Activated naive CD4-positive, alpha-beta T cell treated with anti-CD3 and anti-CD28 coated beads for 36 hours (primary cell): ENCODE measurements at regions of chr20 and their contacts with region 1.

Region 1: GRCh38 chr20:54199721-54200176 is 8.1 kb upstream of the PFDN4 start:
- DNase-seq: peak; percentile 80
- H3K4me3 Mint-ChIP-seq: no peak overlapping the region
- H3K27ac Mint-ChIP-seq: no peak overlapping the region
- H3K4me1 Mint-ChIP-seq: no peaks in the 10 kb centered on the region
- H3K27me3 Mint-ChIP-seq: no peaks in the 10 kb centered on the region

Region 2: GRCh38 chr20:52497731-52498130 is 1702.0 kb before region 1 on chr20:
- CTCF ChIA-PET with region 1: no interaction called
- intact Hi-C with region 1: no loop called
- DNase-seq: no peak
- H3K4me3 Mint-ChIP-seq: no peak overlapping the region
- H3K27ac Mint-ChIP-seq: no peak overlapping the region
- H3K4me1 Mint-ChIP-seq: peaks cover 23% of the 10 kb centered on the region
- H3K27me3 Mint-ChIP-seq: no peaks in the 10 kb centered on the region

Region 3: GRCh38 chr20:53949319-53949889 is 250.3 kb before region 1 on chr20:
- CTCF ChIA-PET with region 1: no interaction called
- intact Hi-C with region 1: loop called (anchors 2 kb)
- DNase-seq: peak; percentile 91
- H3K4me3 Mint-ChIP-seq: peak overlapping the region; percentile 61
- H3K27ac Mint-ChIP-seq: peak overlapping the region; percentile 89
- H3K4me1 Mint-ChIP-seq: peaks cover 29% of the 10 kb centered on the region
- H3K27me3 Mint-ChIP-seq: no peaks in the 10 kb centered on the region

Region 4: GRCh38 chr20:54093423-54094267 is 106.1 kb before region 1 on chr20:
- CTCF ChIA-PET with region 1: interaction called, 232 read pairs
- intact Hi-C with region 1: loop called (anchors 1 kb)
- DNase-seq: no peak
- H3K4me3 Mint-ChIP-seq: no peak overlapping the region
- H3K27ac Mint-ChIP-seq: no peak overlapping the region
- H3K4me1 Mint-ChIP-seq: no peaks in the 10 kb centered on the region
- H3K27me3 Mint-ChIP-seq: no peaks in the 10 kb centered on the region

Region 5: GRCh38 chr20:54103067-54103761 is 96.5 kb before region 1 on chr20:
- CTCF ChIA-PET with region 1: interaction called, 232 read pairs
- intact Hi-C with region 1: loop called (anchors 1 kb)
- DNase-seq: peak; percentile 88
- H3K4me3 Mint-ChIP-seq: no peak overlapping the region
- H3K27ac Mint-ChIP-seq: no peak overlapping the region
- H3K4me1 Mint-ChIP-seq: no peaks in the 10 kb centered on the region
- H3K27me3 Mint-ChIP-seq: peaks cover 3% of the 10 kb centered on the region

Region 6: DNA sequence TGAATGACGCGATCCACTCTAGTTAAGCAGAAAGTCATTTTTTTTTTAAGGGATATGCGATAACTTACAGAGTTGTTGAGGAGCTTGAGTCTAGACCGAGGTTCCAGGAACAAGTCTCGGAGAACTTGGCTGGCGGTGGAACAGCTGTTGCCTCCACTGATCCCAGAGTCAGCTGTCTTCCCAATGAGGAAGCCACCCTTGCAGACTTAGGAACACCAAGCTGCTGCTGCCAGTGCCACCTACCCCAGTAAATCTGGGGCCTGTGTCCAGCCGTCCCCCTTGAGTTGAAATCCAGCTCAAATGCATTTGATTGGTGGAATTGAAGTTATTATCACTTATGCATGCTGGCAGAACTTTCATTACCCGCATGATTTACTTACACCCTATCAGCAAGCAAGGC is 14.8 kb after region 1 on chr20:
- CTCF ChIA-PET with region 1: interaction called, 14 read pairs
- intact Hi-C with region 1: no loop called
- DNase-seq: no peak
- H3K4me3 Mint-ChIP-seq: no peak overlapping the region
- H3K27ac Mint-ChIP-seq: no peak overlapping the region
- H3K4me1 Mint-ChIP-seq: peaks cover 40% of the 10 kb centered on the region
- H3K27me3 Mint-ChIP-seq: no peaks in the 10 kb centered on the region